Posterior vena cava (tissue), 2 donors: ENCODE measurements at regions of chr4 and their contacts with region 1.

Region 1: DNA sequence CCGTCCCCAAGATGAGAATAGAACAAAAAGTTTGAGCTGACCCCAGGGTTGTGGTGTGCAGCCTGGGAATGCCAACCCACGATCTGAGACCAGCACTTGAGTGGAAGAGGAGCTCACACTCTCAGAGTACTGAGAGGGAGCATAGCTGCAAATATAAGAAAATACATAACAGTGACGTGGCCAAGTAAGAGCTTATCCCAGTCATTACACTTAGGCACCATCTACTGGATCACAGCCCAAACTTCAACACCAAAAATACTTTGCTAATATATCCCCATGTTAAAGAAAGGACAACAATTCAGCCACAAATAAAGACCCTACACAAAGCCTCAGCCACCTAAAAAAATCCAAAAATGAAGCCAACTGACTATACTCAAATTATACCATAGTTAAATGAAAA is 33.3 kb upstream of the CXCL6 start:
- DNase-seq: no peak

Region 2: DNA sequence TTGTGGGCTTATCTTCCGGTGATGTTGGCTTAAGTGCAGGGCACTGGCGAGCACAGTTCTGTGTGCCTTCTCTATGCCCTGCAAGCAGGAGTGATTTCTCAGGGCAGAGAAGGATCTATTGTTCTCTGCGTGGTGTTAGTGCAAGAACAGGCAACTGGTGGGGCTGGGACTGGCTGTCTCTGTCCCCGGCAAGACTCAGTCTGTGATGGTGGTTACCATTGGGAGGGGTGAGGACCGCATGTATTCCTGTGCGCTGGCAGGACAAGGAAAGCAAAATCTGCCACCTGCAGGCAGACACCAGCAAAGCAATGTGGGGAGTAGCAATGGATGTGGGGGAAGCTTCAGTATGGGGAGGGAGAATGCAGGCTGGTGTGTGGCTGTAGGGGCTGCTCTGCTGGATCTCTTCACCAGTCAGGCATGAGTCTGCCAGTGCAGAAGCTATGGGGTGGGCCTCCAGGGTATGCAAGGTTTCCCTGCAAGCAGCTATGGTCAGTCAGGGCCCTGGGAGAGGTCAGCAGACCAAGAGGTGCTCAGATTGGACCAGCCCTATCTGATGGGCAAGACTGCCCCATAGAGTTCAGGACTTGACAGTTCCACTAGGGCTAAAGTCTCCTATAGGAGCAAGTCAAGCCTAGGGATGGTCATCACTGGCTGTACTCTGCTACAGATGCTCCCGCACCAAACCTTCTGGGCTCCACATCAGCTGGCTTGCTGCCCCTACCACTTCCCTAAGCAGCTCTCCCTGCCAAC is 161.8 kb after region 1 on chr4:
- intact Hi-C with region 1: loop called in 1 of 2 experiments (anchors 10 kb)
- DNase-seq: no peak